ENCODE measurements at regions of chr15 and their contacts with region 1.

Region 1: GRCh38 chr15:57306161-57306943 is 70.0 kb upstream of the CGNL1 start:
- DNase-seq: peak; percentile 68 to 82 (median 80)
- H3K4me3 ChIP-seq: peak overlapping the region; percentile 29 to 83 (median 70)
- H3K27ac ChIP-seq: no peak overlapping the region
- H3K4me1 ChIP-seq: peaks cover 0 to 17% (median 11%) of the 10 kb centered on the region in 4 experiments
- H3K27me3 ChIP-seq: peaks cover 0 to 1% (median 0%) of the 10 kb centered on the region in 5 experiments

Region 2: DNA sequence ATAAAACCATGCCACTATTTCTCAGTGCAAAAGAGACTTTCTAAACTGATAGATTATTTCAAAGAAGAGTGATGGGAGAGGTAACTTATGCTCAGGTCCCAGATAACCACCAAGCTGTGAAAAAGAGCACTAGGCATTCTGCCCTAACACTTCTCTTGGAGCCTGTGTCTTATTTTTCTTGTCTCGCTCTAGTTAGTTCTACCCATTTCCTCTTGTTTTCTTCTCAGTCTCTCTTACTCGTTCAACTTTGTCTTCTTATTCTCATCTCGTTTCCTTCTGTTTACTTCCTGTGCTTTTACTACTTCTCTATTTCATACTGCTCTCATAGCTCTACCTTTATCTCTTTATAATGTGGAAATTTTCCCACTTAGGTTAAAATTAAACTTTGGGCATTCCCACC is 21.8 kb before region 1 on chr15:
- CTCF ChIA-PET with region 1: interaction called, 10 read pairs
- POLR2A ChIA-PET with region 1: no interaction called
- DNase-seq: no peak
- H3K4me3 ChIP-seq: peak overlapping the region in 1 of 7 experiments; percentile 23
- H3K27ac ChIP-seq: peak overlapping the region; percentile 6 to 68
- H3K4me1 ChIP-seq: peaks cover 4 to 31% (median 13%) of the 10 kb centered on the region in 4 experiments
- H3K27me3 ChIP-seq: no peaks in the 10 kb centered on the region

Measured in common myeloid progenitor, CD34-positive (primary cell).